B cell (primary cell): ENCODE measurements at regions of chr13 and their contacts with region 1.

Region 1: DNA sequence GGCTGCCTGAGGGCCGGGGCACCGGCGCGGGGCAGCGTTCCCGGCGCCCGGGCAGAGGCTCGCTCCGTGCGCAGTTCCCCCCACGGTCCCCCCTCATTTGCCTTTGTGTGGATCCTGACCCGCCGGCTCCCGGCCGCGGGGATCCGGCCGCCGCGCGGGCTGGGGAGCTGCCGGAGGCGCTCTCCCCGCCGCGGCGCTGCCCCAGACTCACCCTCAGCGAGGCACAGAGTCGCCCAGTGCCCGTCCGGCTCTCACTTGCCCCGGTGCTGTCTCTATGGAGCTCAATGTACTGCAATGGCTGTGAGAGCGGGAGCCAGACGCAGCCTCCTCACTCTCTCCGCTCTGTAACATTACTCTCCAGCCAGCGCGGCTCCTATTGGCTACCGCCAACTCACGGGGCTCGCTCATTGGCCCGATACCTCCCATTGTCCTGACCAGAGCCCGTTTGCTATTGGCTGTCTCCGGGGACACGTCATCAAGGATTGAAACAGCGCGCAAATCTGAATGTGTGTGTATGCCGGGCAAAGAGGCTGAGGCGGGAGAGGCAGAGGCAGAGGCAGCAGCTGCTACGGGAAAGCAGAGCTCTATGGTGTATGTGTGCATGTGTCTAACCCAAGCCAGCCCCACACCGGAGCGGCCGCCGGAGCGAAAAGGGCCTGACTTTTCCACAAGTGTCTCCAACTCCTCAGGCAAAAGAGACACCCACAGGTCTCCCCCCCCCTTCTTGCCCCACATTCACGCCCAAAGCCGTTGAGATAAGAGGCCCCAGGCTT is at the start of gene HMGB1:
- DNase-seq: peak; percentile 97
- ATAC-seq: peak; percentile 82
- H3K4me3 ChIP-seq: peak within 1 kb of the TSS; percentile 21 to 86 (median 78)
- H3K4me3 Mint-ChIP-seq: peak within 1 kb of the TSS; percentile 98
- H3K27ac ChIP-seq: peak within 1 kb of the TSS; percentile 54 to 91
- H3K27ac Mint-ChIP-seq: peak within 1 kb of the TSS; percentile 100
- H3K4me1 ChIP-seq: peaks cover 33 to 38% of the 10 kb centered on the region in 2 donors
- H3K4me1 Mint-ChIP-seq: peaks cover 38% of the 10 kb centered on the region
- H3K27me3 ChIP-seq: no peaks in the 10 kb centered on the region
- H3K27me3 Mint-ChIP-seq: no peaks in the 10 kb centered on the region
- CTCF ChIP-seq: no peak
- total RNA-seq, gene HMGB1: 483 and 529 TPM in 2 replicates

Region 2: GRCh38 chr13:28505641-28506051 is 1960.1 kb before region 1 on chr13:
- CTCF ChIA-PET with region 1: no interaction called
- POLR2A ChIA-PET with region 1: no interaction called
- intact Hi-C with region 1: no loop called
- DNase-seq: no peak
- ATAC-seq: no peak
- H3K4me3 ChIP-seq: no peak overlapping the region
- H3K4me3 Mint-ChIP-seq: no peak overlapping the region
- H3K27ac ChIP-seq: no peak overlapping the region
- H3K27ac Mint-ChIP-seq: no peak overlapping the region
- H3K4me1 ChIP-seq: peaks cover 0 to 8% of the 10 kb centered on the region in 2 donors
- H3K4me1 Mint-ChIP-seq: peaks cover 4% of the 10 kb centered on the region
- H3K27me3 ChIP-seq: no peaks in the 10 kb centered on the region
- H3K27me3 Mint-ChIP-seq: peaks cover 4% of the 10 kb centered on the region
- CTCF ChIP-seq: no peak

Region 3: DNA sequence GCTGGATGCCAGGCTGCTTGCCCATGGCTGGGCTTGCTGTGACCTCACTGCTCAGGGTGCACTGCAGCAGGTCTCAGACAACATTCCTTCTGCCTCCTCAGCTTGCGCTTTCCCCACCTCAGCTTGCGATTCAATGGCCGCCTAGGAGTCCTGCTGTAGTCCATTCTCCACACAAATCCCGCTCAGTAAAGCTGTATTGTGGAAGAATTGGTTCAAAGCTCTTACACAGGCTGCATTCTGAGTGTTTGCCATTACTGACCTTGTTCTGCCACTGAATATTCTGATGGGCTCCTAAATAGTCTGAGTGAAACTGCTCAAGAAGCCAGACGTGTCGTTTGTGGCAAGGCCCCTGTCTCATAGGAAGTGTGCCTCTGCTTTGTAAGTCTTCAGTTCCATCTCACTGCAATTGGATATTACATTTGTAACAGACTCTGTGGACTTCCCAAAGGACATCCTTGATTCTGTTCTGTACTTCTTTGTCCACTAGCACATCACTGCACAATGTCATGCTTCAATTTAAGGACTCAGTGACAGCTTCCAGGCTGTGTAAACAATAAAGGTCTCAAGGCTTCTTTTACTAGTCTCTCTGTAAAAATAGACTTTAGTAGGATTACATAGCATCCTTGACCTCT is 208.2 kb before region 1 on chr13:
- CTCF ChIA-PET with region 1: interaction called, 3 read pairs
- POLR2A ChIA-PET with region 1: no interaction called
- intact Hi-C with region 1: loop called (anchors 1 kb)
- DNase-seq: no peak
- ATAC-seq: no peak
- H3K4me3 ChIP-seq: no peak overlapping the region
- H3K4me3 Mint-ChIP-seq: no peak overlapping the region
- H3K27ac ChIP-seq: no peak overlapping the region
- H3K27ac Mint-ChIP-seq: peak overlapping the region; percentile 21
- H3K4me1 ChIP-seq: peaks cover 5 to 6% of the 10 kb centered on the region in 2 donors
- H3K4me1 Mint-ChIP-seq: peaks cover 13% of the 10 kb centered on the region
- H3K27me3 ChIP-seq: no peaks in the 10 kb centered on the region
- H3K27me3 Mint-ChIP-seq: no peaks in the 10 kb centered on the region
- CTCF ChIP-seq: no peak

Region 4: GRCh38 chr13:30371649-30372265 is 94.0 kb before region 1 on chr13:
- CTCF ChIA-PET with region 1: interaction called, 19 read pairs
- POLR2A ChIA-PET with region 1: interaction called, 13 read pairs
- intact Hi-C with region 1: loop called (anchors 1 kb)
- DNase-seq: peak; percentile 98
- ATAC-seq: peak; percentile 83
- H3K4me3 ChIP-seq: peak overlapping the region; percentile 13 to 47 (median 45)
- H3K4me3 Mint-ChIP-seq: peak overlapping the region; percentile 91
- H3K27ac ChIP-seq: peak overlapping the region; percentile 76 to 78
- H3K27ac Mint-ChIP-seq: peak overlapping the region; percentile 94
- H3K4me1 ChIP-seq: peaks cover 75 to 81% of the 10 kb centered on the region in 2 donors
- H3K4me1 Mint-ChIP-seq: peaks cover 84% of the 10 kb centered on the region
- H3K27me3 ChIP-seq: no peaks in the 10 kb centered on the region
- H3K27me3 Mint-ChIP-seq: no peaks in the 10 kb centered on the region
- CTCF ChIP-seq: no peak

Region 5: DNA sequence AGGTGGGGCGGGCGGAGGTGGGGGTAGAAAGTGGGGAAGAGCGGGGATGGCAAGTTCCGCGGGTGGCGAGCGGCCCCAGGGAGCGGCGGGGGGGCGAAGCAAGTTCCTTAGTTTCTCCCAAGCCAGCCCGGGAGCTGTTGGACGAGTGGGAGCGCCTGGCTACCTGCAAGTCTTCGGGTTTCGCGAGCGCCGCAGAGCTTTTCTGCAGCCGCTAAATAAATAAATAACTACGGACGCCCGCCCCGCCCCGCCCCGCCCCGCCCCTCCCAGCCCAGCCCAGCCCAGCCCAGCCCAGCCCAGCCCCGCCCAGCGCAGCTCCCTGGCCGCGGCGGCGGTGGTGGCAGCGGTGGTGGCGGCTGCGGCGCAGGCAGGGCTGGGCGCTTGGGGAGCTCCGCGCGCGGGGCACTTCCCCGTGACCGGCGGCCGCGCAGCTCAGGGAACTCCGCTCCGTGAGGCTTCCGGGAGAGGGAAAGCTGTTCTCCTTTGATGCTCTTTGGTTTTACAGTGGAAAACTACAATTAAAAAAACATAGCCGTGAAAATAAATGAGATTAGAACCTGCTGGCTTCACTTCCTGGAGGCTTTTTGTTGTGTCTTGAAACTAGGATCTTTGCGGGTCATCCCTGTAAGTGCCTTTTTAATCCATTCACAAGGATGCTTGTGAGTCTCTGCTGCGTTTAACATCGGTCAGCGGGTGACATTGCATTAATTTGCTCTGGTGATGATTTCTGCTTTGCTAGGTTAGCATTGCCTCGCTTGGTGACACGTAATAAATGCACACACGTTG is 43.5 kb before region 1 on chr13 and contains the start of gene UBE2L5:
- CTCF ChIA-PET with region 1: interaction called, 8 read pairs
- POLR2A ChIA-PET with region 1: interaction called, 12 read pairs
- intact Hi-C with region 1: loop called (anchors 5 kb)
- DNase-seq: peak; percentile 85
- ATAC-seq: peak; percentile 93
- H3K4me3 ChIP-seq: peak within 1 kb of the TSS; percentile 57 to 83 (median 77)
- H3K4me3 Mint-ChIP-seq: peak within 1 kb of the TSS; percentile 92
- H3K27ac ChIP-seq: peak within 1 kb of the TSS; percentile 45 to 71
- H3K27ac Mint-ChIP-seq: peak within 1 kb of the TSS; percentile 90
- H3K4me1 ChIP-seq: peaks cover 18 to 42% of the 10 kb centered on the region in 2 donors
- H3K4me1 Mint-ChIP-seq: peaks cover 47% of the 10 kb centered on the region
- H3K27me3 ChIP-seq: no peaks in the 10 kb centered on the region
- H3K27me3 Mint-ChIP-seq: no peaks in the 10 kb centered on the region
- CTCF ChIP-seq: no peak
- total RNA-seq, gene UBE2L5: 0.57 and 0.58 TPM in 2 replicates

Region 6: DNA sequence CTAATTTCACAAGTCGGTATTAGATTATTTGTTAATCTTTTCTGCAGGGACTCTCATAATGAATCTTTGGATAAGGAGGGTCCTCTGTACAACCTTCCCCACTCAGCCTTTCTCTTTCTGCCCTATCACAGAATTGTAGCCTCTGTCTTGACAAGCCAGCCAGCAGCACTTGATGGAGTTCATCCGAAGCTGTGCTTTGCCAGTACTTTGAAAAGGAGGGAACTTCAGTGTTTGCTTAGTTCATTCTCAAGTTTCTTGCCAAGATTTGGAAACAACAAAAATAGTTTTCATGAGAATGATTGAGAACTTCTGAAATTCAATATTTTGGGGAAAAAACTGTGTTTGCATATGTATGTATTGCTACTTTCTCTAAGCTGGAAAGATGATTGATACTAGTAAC is 69.3 kb after region 1 on chr13:
- CTCF ChIA-PET with region 1: no interaction called
- POLR2A ChIA-PET with region 1: no interaction called
- intact Hi-C with region 1: no loop called
- DNase-seq: no peak
- ATAC-seq: no peak
- H3K4me3 ChIP-seq: no peak overlapping the region
- H3K4me3 Mint-ChIP-seq: no peak overlapping the region
- H3K27ac ChIP-seq: no peak overlapping the region
- H3K27ac Mint-ChIP-seq: no peak overlapping the region
- H3K4me1 ChIP-seq: no peaks in the 10 kb centered on the region
- H3K4me1 Mint-ChIP-seq: no peaks in the 10 kb centered on the region
- H3K27me3 ChIP-seq: no peaks in the 10 kb centered on the region
- H3K27me3 Mint-ChIP-seq: no peaks in the 10 kb centered on the region
- CTCF ChIP-seq: no peak

Region 7: DNA sequence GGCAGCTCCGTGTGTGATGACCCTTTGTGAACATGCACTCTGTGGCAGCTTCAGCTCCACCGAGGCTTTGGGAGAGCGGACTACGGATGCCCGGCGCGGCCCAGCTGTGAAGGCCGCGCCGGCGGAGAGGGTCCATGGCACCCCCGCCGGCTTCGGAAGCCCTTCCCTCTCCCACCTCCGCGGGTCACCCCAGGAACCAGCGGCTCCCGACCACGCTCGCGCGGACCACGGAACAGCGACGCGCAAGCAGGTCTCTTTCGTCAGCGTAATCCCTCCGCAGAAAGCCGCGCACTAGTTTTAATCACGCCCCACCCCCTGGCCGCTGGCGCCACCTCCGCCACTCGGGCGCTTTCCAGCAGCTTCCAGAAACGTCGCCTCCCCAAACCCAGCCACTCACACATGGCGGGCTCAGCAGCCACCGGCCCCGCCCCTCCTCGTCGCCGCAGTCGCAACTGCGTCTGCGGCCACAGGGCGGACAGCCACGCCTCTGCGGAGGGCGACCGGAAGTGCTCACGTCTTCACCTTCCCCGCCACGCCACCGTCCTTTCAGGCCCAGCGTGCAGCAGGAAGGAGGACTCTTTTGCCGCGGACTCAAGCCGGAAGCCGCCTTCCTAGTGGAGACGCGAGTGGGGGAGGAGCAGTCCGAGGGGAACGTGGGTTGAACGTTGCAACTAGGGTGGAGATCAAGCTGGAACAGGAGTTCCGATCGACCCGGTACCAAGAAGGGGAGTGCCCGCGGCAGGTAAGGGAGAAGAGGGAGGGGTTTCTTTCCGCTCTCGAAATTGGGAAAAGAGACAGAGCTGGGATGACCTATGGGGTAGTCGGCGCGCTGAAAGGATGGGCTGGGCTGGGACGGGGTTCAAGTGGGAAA is 151.8 kb after region 1 on chr13 and contains the start of gene USPL1:
- CTCF ChIA-PET with region 1: interaction called, 4 read pairs
- POLR2A ChIA-PET with region 1: interaction called, 33 read pairs
- intact Hi-C with region 1: no loop called
- DNase-seq: peak; percentile 100
- ATAC-seq: peak; percentile 82
- H3K4me3 ChIP-seq: peak within 1 kb of the TSS; percentile 90 to 98 (median 93)
- H3K4me3 Mint-ChIP-seq: no peak within 1 kb of the TSS
- H3K27ac ChIP-seq: peak within 1 kb of the TSS; percentile 98 to 100
- H3K27ac Mint-ChIP-seq: no peak within 1 kb of the TSS
- H3K4me1 ChIP-seq: peaks cover 36 to 38% of the 10 kb centered on the region in 2 donors
- H3K4me1 Mint-ChIP-seq: peaks cover 35% of the 10 kb centered on the region
- H3K27me3 ChIP-seq: no peaks in the 10 kb centered on the region
- H3K27me3 Mint-ChIP-seq: no peaks in the 10 kb centered on the region
- CTCF ChIP-seq: no peak
- total RNA-seq, gene USPL1: 52.2 and 55.8 TPM in 2 replicates

Region 8: GRCh38 chr13:31161828-31162590 is 696.2 kb after region 1 on chr13 and contains the start of gene HSPH1:
- CTCF ChIA-PET with region 1: no interaction called
- POLR2A ChIA-PET with region 1: no interaction called
- intact Hi-C with region 1: loop called (anchors 10 kb)
- DNase-seq: peak; percentile 100
- ATAC-seq: peak; percentile 83
- H3K4me3 ChIP-seq: peak within 1 kb of the TSS; percentile 82 to 93 (median 88)
- H3K4me3 Mint-ChIP-seq: peak within 1 kb of the TSS; percentile 96
- H3K27ac ChIP-seq: peak within 1 kb of the TSS; percentile 94 to 96
- H3K27ac Mint-ChIP-seq: peak within 1 kb of the TSS; percentile 99
- H3K4me1 ChIP-seq: peaks cover 22% of the 10 kb centered on the region in 2 donors
- H3K4me1 Mint-ChIP-seq: peaks cover 34% of the 10 kb centered on the region
- H3K27me3 ChIP-seq: no peaks in the 10 kb centered on the region
- H3K27me3 Mint-ChIP-seq: no peaks in the 10 kb centered on the region
- CTCF ChIP-seq: no peak
- total RNA-seq, gene HSPH1: 52.9 and 56.4 TPM in 2 replicates